PC-3 (cell line): ENCODE measurements at regions of chr1 and their contacts with region 1.

Region 1: DNA sequence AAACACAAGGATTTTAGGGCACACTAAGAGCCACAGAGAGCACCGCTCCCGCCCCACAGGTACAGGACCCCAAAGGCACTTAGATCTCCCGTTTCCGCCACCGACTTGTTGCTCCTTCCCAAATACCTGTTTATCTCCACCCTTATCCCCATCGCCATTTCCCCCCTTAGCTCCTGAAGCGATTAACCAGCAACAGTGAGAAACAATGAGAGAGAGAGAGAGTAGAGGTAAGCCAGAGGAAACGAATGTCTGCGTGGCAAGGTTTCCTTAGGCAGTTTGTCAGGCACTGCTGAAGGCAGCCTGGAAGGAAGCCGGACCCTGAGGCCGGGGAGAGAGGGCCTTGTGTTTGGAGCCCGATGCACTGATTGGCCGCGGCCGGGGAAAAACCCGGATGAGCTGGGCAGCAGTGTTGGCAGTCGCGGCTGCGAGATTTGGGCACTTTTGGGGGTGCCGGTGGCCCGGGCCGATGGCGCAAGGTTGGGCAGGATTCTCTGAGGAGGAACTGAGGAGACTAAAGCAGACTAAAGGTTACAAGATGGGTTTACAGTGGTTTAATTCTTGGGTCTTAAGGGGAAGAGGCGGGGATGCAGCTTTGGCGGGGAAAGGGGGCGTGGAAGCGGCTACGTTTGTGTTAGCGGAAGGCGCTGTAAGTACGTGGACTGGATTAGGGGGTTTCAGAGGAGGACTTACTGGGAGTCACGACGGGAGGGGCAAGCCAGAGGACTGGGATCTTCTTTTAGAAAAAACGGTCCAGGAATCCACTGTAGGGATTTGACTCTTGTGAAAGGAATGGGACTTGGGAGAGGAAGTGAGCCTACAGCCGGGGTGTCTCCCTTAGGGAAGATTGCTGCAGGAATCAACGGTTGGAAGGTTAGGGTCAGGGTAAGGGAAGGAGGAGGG is at the start of gene GORAB:
- DNase-seq: peak; percentile 96
- ATAC-seq: peak; percentile 97
- H3K4me3 ChIP-seq: peak within 1 kb of the TSS; percentile 72
- H3K27ac ChIP-seq: peak within 1 kb of the TSS; percentile 81
- H3K4me1 ChIP-seq: peaks cover 19% of the 10 kb centered on the region
- H3K27me3 ChIP-seq: peaks cover 4% of the 10 kb centered on the region; the same call in 1 of the 2 replicates
- CTCF ChIP-seq: no peak
- total RNA-seq, gene GORAB: 22.1 and 23.2 TPM in 2 replicates

Region 2: GRCh38 chr1:169933984-169934725 is 597.9 kb before region 1 on chr1:
- CTCF ChIA-PET with region 1: no interaction called
- POLR2A ChIA-PET with region 1: no interaction called
- intact Hi-C with region 1: loop called (anchors 5 kb)
- DNase-seq: peak; percentile 72
- ATAC-seq: peak; percentile 46
- H3K4me3 ChIP-seq: no peak overlapping the region
- H3K27ac ChIP-seq: no peak overlapping the region
- H3K4me1 ChIP-seq: peaks cover 19% of the 10 kb centered on the region
- H3K27me3 ChIP-seq: no peaks in the 10 kb centered on the region
- CTCF ChIP-seq: no peak

Region 3: GRCh38 chr1:170471398-170472053 is 60.5 kb before region 1 on chr1:
- CTCF ChIA-PET with region 1: no interaction called
- POLR2A ChIA-PET with region 1: interaction called, 19 read pairs
- intact Hi-C with region 1: no loop called
- DNase-seq: no peak
- ATAC-seq: no peak
- H3K4me3 ChIP-seq: no peak overlapping the region
- H3K27ac ChIP-seq: no peak overlapping the region
- H3K4me1 ChIP-seq: no peaks in the 10 kb centered on the region
- H3K27me3 ChIP-seq: peaks cover 16% of the 10 kb centered on the region; the same call in 1 of the 2 replicates
- CTCF ChIP-seq: no peak

Region 4: DNA sequence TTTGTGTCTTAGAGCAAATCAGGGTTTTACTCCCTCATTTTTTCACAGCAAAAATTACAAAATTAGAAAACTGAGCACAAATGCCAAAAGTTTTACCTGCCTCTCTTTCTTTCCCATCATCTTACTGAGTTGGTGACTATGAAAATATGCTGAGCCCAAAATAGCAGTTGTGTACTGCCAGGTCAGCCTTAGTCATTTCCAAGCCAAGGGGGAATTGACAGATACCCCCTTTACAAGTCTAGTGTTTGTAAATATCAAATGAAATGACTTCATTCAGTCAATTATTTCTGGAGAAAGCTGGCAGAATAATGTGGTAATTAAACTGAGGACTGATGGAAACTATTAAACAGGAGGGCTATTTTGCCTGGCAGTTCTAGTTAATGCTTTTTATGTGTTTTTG is 11.4 kb before region 1 on chr1:
- CTCF ChIA-PET with region 1: no interaction called
- POLR2A ChIA-PET with region 1: interaction called, 12 read pairs
- intact Hi-C with region 1: no loop called
- DNase-seq: peak; percentile 69
- ATAC-seq: peak; percentile 76
- H3K4me3 ChIP-seq: no peak overlapping the region
- H3K27ac ChIP-seq: peak overlapping the region; percentile 22; the same call in 1 of the 2 replicates
- H3K4me1 ChIP-seq: peaks cover 19% of the 10 kb centered on the region; the same call in 1 of the 2 replicates
- H3K27me3 ChIP-seq: peaks cover 27% of the 10 kb centered on the region
- CTCF ChIP-seq: no peak